H1 (cell line): ENCODE measurements at regions of chr12 and their contacts with region 1.

Region 1: GRCh38 chr12:32106517-32107358 is at the start of gene BICD1:
- DNase-seq: peak; percentile 39 to 88
- H3K4me3 ChIP-seq: peak within 1 kb of the TSS; percentile 96 to 97 (median 96)
- H3K27ac ChIP-seq: peak within 1 kb of the TSS; percentile 76
- H3K4me1 ChIP-seq: peaks cover 4 to 15% (median 7%) of the 10 kb centered on the region in 4 experiments; a peak in 5 of 7 replicates
- H3K27me3 ChIP-seq: no peaks in the 10 kb centered on the region; a peak in 1 of 7 replicates
- CTCF ChIP-seq: peak; percentile 24 to 38 (median 28)
- EP300 ChIP-seq: no peak
- POLR2A ChIP-seq: peak; percentile 69 to 85
- RAD21 ChIP-seq: no peak; a peak in 2 of 4 replicates
- total RNA-seq, gene BICD1: 54.3 and 58.4 TPM in 2 replicates

Region 2: GRCh38 chr12:32062881-32063280 is 43.9 kb before region 1 on chr12:
- CTCF ChIA-PET with region 1: interaction called, 12 read pairs
- POLR2A ChIA-PET with region 1: interaction called, 3 read pairs
- DNase-seq: no peak
- H3K4me3 ChIP-seq: no peak overlapping the region
- H3K27ac ChIP-seq: no peak overlapping the region
- H3K4me1 ChIP-seq: no peaks in the 10 kb centered on the region; a peak in 1 of 7 replicates
- H3K27me3 ChIP-seq: 0 out of 7 replicates have a peak, but pooled peaks cover 0 to 2% (median 0%) of the 10 kb centered on the region in 4 experiments
- CTCF ChIP-seq: no peak
- EP300 ChIP-seq: no peak
- POLR2A ChIP-seq: no peak
- RAD21 ChIP-seq: no peak

Region 3: DNA sequence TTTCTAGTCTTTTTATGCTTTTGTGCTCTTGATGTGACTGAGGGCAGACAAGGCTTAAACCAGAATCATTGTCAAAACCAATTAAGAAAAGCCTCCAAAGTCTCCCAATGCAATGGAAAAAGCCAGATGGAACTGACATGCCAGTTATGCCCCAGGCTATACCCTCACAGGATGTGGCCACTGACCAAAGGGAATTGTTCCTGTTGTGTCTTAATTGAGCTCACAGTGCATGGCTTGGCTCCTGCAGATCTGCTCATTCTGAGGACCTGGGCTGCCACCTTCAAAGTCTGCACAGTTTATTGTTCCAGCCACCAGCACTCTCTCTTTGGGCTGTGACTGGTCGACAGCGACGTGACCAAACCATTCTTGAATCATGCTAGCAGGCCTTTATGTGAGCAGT is 17.2 kb before region 1 on chr12:
- CTCF ChIA-PET with region 1: interaction called, 4 read pairs
- POLR2A ChIA-PET with region 1: interaction called, 10 read pairs
- DNase-seq: no peak
- H3K4me3 ChIP-seq: no peak overlapping the region
- H3K27ac ChIP-seq: no peak overlapping the region
- H3K4me1 ChIP-seq: peaks cover 0 to 4% (median 1%) of the 10 kb centered on the region in 4 experiments; a peak in 3 of 7 replicates
- H3K27me3 ChIP-seq: no peaks in the 10 kb centered on the region
- CTCF ChIP-seq: no peak
- EP300 ChIP-seq: no peak
- POLR2A ChIP-seq: no peak
- RAD21 ChIP-seq: no peak

Region 4: GRCh38 chr12:32252199-32253073 is 145.7 kb after region 1 on chr12:
- CTCF ChIA-PET with region 1: no interaction called
- POLR2A ChIA-PET with region 1: no interaction called
- DNase-seq: no peak
- H3K4me3 ChIP-seq: no peak overlapping the region
- H3K27ac ChIP-seq: no peak overlapping the region
- H3K4me1 ChIP-seq: peaks cover 4 to 16% (median 8%) of the 10 kb centered on the region in 4 experiments; a peak in 5 of 7 replicates
- H3K27me3 ChIP-seq: no peaks in the 10 kb centered on the region
- CTCF ChIP-seq: no peak
- EP300 ChIP-seq: no peak
- POLR2A ChIP-seq: no peak
- RAD21 ChIP-seq: no peak